AG04449 (cell line): ENCODE measurements at regions of chr1 and their contacts with region 1.

Region 1: DNA sequence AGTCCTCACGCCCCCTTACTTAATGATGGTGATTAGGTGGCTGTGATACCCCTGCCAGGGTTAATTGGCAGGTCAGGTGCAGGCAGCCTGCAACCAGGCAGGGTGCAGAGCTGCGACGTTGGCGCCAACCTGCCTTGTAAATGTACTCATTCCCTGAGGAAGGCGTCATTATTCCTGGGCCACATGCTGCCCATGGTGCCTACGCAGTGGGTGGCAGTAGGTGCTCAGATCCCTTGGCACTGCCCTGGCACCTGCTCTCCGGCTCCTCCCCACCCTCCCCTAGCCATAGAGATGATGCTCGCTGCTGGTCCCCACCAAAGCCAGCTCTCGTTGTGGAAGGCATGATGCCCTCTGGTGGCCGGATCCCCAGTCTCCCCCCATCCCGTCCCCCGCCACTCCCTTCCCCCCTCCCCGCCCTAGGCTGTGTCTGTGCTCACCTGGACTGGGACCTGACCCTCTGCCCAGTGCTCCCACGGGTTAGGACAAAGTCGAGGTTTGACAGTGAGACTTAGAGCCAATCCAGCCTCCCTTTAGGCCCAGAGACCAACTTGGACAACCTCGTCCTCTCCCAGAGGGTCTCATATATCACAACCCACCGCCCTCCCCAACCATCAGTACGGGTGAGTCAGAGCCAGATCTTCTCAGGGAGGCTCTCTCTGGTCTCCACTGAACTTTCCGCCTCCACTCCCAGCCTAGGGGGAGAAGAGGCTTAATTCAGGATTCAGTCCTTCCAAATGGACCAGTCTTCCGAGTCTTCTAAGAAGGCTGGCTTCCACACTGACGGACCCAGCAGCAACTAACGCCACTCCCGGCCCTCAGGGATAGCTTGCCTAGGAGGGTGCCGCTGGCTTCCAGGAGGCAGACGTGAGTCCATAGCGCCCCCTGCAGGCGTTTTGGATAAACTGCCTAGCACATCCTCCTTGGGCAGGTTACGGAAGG is 5.7 kb downstream of the KRTCAP2 start:
- DNase-seq: no peak
- H3K4me3 ChIP-seq: no peak overlapping the region
- CTCF ChIP-seq: peak; percentile 87

Region 2: DNA sequence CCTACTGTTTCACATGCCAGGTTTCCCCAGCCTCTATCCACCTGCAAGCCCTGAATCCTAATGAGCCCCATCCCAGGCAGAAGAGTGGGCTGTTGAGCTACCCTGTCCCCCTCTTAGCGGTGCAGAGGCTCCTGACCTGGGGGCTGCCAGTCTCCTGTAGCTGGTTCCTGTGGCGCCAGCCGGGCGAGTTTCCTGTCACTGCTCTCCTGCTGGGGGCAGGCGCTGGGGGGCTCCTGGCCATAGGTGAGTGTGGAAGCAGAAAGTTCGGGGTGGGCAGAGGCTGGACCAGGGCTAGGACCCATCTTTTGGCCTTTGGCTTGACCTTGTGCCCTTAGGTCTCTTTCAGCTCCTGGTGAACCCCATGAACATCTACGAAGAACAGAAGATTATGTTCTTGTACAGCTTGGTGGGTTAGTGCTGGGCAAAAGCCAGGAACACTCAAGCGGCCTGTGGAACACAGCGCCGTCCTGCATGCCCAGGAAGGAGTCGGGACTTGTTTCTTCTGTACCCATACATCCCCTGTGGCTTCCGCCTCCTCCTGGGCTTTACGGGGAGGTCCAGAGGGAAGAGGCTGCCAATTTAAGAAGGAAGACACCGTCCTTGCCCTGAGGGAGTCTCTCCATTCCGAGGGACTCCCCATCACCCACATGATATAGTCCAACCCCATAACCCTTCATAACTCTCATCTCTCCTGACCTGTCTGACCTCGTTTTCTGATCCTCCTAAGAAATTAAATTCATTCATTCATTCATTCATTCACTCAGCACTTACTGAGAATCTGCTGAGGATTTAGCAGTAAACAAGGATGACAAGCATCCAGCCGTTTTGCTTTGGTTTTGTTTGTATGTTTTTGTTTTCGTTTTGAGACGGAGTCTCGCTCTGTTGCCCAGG is 132.9 kb before region 1 on chr1:
- CTCF ChIA-PET with region 1: no interaction called
- POLR2A ChIA-PET with region 1: no interaction called
- DNase-seq: no peak
- H3K4me3 ChIP-seq: no peak overlapping the region
- CTCF ChIP-seq: no peak

Region 3: DNA sequence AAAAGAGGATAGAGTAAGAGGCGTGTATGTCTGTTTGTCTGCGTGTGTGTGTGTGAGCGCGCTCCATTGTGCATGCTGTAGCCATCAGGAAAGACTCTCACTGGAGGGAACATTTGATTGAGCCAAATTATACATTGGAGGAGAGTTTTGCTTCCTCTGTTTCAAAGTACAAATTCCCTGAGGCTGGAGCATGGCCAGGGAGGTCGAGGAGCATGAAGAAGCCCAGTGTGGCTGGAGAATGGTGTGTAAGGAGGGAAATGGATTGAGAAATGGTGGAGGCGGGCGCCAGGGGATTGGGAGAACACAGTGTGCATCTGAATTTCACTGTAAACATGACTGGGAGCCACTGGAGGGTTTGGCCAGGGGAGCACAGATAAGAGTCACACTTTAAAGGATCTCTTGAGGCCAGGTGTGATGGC is 61.8 kb before region 1 on chr1:
- CTCF ChIA-PET with region 1: interaction called, 168 read pairs
- POLR2A ChIA-PET with region 1: no interaction called
- DNase-seq: no peak
- H3K4me3 ChIP-seq: no peak overlapping the region
- CTCF ChIP-seq: no peak

Region 4: GRCh38 chr1:155135415-155136028 is 31.9 kb before region 1 on chr1 and contains the start of gene SLC50A1:
- CTCF ChIA-PET with region 1: interaction called, 16 read pairs
- POLR2A ChIA-PET with region 1: interaction called, 6 read pairs
- DNase-seq: peak; percentile 46
- H3K4me3 ChIP-seq: peak within 1 kb of the TSS; percentile 94
- CTCF ChIP-seq: no peak

Region 5: DNA sequence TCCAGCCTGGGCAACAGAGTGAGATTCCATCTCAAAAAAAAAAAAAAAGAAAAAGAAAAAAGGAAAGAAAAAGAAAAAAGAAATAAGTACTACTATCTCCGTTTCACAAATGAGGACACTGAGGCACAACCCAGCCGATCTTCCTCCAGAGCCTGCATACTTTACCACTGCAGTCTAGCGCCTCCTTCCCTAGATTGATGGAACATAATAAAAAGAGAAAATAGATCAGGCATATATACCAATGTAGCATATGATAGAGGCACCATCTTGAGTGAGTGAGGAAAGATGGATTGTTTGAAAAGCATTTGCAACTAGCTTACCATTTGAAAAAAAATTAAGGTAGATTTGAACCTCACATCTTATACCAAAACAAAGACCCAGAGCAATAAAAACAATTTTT is 21.9 kb before region 1 on chr1:
- CTCF ChIA-PET with region 1: interaction called, 16 read pairs
- POLR2A ChIA-PET with region 1: no interaction called
- DNase-seq: no peak
- H3K4me3 ChIP-seq: no peak overlapping the region
- CTCF ChIP-seq: no peak